PC-9 (cell line): ENCODE measurements at regions of chr15 and their contacts with region 1.

Region 1: DNA sequence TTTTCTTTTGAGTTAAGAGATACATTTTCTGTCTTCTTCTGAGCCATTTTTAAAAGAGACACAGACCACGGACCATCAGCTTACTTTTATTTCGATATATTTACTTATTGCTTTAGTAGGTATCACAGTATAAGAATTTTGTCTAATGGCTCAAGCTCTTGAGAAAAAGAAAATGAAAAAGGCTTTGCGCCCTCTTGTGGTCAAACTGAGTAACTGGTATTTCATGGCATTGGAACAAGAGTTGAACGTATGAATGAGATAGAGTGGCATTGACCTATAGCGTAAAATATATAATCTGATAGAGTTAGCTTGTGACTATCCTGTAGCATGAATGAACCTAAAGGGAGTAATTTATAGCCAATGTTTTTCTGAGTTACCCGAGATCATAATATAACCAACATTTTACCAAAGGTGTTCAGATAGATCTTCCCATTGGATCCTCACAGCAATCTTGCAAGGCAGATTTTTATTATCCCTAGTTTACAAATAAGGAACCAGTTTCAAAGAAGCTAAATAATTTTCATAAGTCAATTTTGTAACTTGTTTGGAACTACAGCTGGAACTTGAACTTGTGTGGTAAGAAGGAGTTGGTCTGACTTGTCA is 154.6 kb downstream of the POLR2M start:
- DNase-seq: peak; percentile 6 to 36
- H3K4me3 ChIP-seq: no peak overlapping the region
- H3K27ac ChIP-seq: no peak overlapping the region
- H3K4me1 ChIP-seq: no peaks in the 10 kb centered on the region
- H3K27me3 ChIP-seq: no peaks in the 10 kb centered on the region
- CTCF ChIP-seq: peak; percentile 82

Region 2: GRCh38 chr15:57340682-57341259 is 520.4 kb before region 1 on chr15:
- CTCF ChIA-PET with region 1: no interaction called
- POLR2A ChIA-PET with region 1: no interaction called
- intact Hi-C with region 1: loop called (anchors 5 kb)
- DNase-seq: peak; percentile 46 to 50
- H3K4me3 ChIP-seq: no peak overlapping the region
- H3K27ac ChIP-seq: no peak overlapping the region
- H3K4me1 ChIP-seq: no peaks in the 10 kb centered on the region
- H3K27me3 ChIP-seq: no peaks in the 10 kb centered on the region
- CTCF ChIP-seq: peak; percentile 87

Region 3: DNA sequence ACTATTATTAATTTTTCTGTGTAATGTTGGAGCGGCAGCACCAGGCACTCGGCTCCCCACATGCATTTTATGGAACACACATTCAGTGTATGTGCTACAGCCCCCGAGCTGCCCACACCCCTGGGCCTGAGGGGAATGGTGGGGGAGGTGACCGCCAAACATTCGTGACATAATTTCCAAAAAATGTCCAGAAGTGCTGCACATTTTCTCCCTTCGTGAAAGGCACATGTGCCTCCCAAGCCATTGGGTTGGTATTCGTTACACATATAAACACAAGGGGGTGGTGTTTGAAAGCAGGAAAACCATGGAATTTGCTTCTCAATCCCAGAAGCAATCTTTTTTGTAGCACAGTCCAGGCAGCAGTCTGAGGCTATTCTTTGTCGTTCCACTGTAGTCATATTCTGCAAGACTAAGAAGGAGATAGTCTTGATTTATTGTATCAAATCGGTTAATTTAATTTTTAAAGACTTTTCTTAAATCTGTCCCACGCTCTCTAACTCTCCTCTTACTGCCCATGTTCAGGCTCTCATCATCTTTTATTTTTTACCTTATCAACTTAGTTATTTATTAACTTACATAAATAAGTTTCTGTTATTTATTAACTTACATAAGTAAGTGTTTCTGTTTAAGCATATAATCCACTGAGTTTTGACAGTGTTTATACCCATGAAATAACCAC is 193.8 kb before region 1 on chr15:
- CTCF ChIA-PET with region 1: no interaction called
- POLR2A ChIA-PET with region 1: no interaction called
- intact Hi-C with region 1: loop called (anchors 2 kb)
- DNase-seq: peak in 1 of 2 experiments; percentile 20
- H3K4me3 ChIP-seq: no peak overlapping the region
- H3K27ac ChIP-seq: no peak overlapping the region
- H3K4me1 ChIP-seq: no peaks in the 10 kb centered on the region
- H3K27me3 ChIP-seq: no peaks in the 10 kb centered on the region
- CTCF ChIP-seq: no peak

Region 4: DNA sequence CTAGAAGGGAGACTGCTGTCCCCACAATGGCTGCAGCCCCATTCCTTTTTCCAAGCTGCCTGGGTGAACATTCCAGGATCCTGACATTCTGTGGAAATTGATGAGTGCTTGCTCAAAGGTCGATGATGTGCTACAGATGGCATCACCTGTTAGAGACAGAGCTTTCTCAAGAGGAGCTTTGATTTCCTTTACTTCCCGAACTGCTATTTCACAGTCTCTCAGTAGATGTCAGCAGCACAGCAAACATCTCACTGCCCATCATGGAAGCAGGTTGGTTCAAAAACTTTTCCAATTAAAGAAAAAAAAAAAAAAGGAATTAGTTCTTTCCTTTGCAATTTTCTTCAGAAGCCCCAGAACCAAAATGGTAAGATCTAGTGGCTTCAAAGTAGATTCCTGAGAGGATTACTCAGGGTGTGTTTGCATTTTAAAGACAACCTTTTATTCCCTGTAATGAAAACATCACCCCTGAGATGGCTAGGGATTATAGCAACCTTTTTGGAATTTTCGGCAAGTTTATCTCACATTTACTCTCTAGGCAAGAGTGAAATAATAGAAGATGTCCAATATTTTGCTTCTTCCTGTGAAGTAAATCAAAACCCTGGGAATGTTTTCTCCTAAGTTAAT is 109.8 kb before region 1 on chr15:
- CTCF ChIA-PET with region 1: interaction called, 7 read pairs
- POLR2A ChIA-PET with region 1: no interaction called
- intact Hi-C with region 1: loop called (anchors 2 kb)
- DNase-seq: no peak
- H3K4me3 ChIP-seq: no peak overlapping the region
- H3K27ac ChIP-seq: no peak overlapping the region
- H3K4me1 ChIP-seq: no peaks in the 10 kb centered on the region
- H3K27me3 ChIP-seq: no peaks in the 10 kb centered on the region
- CTCF ChIP-seq: peak; percentile 56

Region 5: DNA sequence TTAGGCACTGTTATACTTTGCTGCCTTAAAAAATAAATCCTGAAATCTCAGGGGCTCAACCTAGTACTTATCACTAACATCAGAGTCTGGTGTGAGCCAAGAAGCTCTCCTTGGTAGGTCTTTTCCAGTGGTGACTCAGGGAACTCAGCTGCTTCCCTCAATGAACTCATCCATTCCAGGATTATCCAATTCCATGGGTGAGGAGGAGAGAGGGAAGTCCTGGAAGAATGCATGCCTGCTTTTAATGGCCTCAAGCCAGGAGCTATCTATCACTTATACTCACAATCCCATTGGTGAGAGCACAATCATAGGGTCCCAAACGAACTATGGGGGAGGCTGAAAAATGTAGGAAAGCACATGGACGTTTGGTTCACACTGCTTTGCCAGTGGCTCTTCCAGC is 41.0 kb before region 1 on chr15:
- CTCF ChIA-PET with region 1: no interaction called
- POLR2A ChIA-PET with region 1: no interaction called
- intact Hi-C with region 1: no loop called
- DNase-seq: no peak
- H3K4me3 ChIP-seq: no peak overlapping the region
- H3K27ac ChIP-seq: no peak overlapping the region
- H3K4me1 ChIP-seq: no peaks in the 10 kb centered on the region
- H3K27me3 ChIP-seq: peaks cover 36% of the 10 kb centered on the region
- CTCF ChIP-seq: no peak

Region 6: GRCh38 chr15:58190419-58190818 is 329.3 kb after region 1 on chr15:
- CTCF ChIA-PET with region 1: no interaction called
- POLR2A ChIA-PET with region 1: no interaction called
- intact Hi-C with region 1: no loop called
- DNase-seq: no peak
- H3K4me3 ChIP-seq: no peak overlapping the region
- H3K27ac ChIP-seq: no peak overlapping the region
- H3K4me1 ChIP-seq: 0 out of 2 replicates have a peak, but pooled peaks cover 3% of the 10 kb centered on the region
- H3K27me3 ChIP-seq: no peaks in the 10 kb centered on the region
- CTCF ChIP-seq: no peak